Spleen (tissue), 13 donors: ENCODE measurements at regions of chr1 and their contacts with region 1.

Region 1: GRCh38 chr1:27671964-27672749 is at the start of gene IFI6:
- DNase-seq: peak; percentile 89
- H3K4me3 ChIP-seq: peak within 1 kb of the TSS; percentile 31 to 71 (median 56)
- H3K27ac ChIP-seq: peak within 1 kb of the TSS; percentile 75 to 90 (median 87)
- H3K4me1 ChIP-seq: peaks cover 23 to 52% (median 42%) of the 10 kb centered on the region in 6 donors
- H3K27me3 ChIP-seq: no peaks in the 10 kb centered on the region
- CTCF ChIP-seq: peak in 9 of 11 experiments; percentile 32 to 69 (median 54)
- POLR2A ChIP-seq: peak in 2 of 3 donors; percentile 8 to 74
- total RNA-seq, gene IFI6: 41.6 to 85.8 (median 48.6) TPM

Region 2: DNA sequence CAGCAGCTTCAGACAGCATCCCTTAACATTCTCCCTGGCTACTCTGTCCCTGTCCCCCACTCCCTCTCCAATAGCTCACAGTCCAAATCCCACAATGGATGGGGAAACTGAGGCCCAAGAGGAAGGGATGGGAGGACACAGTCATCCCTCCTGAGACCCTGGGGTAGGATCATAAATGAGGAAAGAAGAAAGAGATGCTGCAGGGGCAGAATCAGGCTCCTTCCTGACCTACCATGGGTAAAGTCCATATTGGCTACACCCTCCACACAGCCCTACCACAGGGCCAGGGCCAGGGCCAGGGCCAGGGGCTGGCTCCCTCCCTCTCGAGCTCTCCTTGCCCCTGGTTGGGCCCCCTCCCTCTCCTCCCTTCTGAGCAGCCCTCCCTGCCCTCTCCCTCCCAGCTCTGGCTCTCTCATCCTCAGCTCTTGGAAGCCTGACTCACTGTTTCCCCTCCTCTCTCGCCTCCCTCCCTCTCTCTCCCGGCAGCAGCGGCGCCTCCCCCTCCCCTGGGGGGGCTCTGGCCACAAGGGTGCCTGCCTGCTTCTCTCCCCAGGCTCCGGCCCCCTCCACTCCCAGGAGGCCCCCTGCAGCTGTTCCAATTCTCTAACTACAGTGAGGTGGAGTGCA is 73.1 kb before region 1 on chr1:
- intact Hi-C with region 1: no loop called
- DNase-seq: no peak
- H3K4me3 ChIP-seq: peak overlapping the region in 2 of 8 donors; percentile 19 to 38
- H3K27ac ChIP-seq: peak overlapping the region in 7 of 8 donors; percentile 47 to 96 (median 90)
- H3K4me1 ChIP-seq: peaks cover 72 to 94% (median 88%) of the 10 kb centered on the region in 6 donors
- H3K27me3 ChIP-seq: peaks cover 0 to 13% (median 0%) of the 10 kb centered on the region in 7 donors
- CTCF ChIP-seq: no peak
- POLR2A ChIP-seq: no peak

Region 3: DNA sequence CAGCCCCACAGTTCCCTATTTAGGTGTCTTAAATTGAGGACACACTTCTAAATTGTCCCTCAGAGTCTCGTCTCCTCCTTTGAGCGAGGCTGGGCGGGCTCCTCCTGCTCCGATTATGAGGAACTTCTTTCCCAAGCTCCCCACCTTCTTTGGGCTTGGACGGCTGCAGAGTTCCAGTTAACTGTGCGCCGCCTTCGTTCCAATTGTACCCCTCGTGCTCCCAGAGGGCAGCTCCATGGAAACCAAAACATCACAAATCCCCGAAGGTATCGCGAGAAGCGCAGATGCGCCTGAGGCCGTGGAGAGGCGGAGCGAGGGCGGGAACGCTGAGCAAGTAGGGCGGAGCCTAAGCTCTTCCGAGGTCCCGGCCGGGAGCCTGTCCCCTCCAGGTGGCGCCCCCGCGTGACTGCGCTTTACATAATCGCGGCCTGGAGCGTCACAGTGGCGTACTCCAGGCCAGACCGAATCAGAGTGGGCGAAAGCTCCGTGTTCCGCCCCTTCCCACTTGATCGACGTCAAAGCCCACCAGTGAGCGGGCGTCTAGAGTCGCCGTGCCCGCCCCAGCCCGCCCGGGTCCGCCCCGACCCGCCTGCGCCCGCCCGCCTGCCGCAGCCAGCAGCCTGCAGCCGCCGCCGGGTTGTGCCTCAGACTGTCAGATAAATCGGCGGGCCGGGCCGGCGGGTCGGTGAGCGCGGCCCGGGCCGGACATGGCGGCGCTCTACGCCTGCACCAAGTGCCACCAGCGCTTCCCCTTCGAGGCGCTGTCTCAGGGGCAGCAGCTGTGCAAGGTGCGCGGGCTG is 53.4 kb after region 1 on chr1 and contains the start of gene FAM76A:
- intact Hi-C with region 1: loop called (anchors 5 kb)
- DNase-seq: peak; percentile 100
- H3K4me3 ChIP-seq: peak within 1 kb of the TSS; percentile 89 to 98 (median 94)
- H3K27ac ChIP-seq: peak within 1 kb of the TSS; percentile 84 to 95 (median 94)
- H3K4me1 ChIP-seq: peaks cover 12 to 45% (median 21%) of the 10 kb centered on the region in 6 donors
- H3K27me3 ChIP-seq: no peaks in the 10 kb centered on the region
- CTCF ChIP-seq: peak in 9 of 11 experiments; percentile 52 to 87 (median 70)
- POLR2A ChIP-seq: peak in 2 of 3 donors; percentile 25 to 85
- total RNA-seq, gene FAM76A: 10.1 to 18.2 (median 15.5) TPM